ENCODE measurements at regions of chr1 and their contacts with region 1.

Region 1: DNA sequence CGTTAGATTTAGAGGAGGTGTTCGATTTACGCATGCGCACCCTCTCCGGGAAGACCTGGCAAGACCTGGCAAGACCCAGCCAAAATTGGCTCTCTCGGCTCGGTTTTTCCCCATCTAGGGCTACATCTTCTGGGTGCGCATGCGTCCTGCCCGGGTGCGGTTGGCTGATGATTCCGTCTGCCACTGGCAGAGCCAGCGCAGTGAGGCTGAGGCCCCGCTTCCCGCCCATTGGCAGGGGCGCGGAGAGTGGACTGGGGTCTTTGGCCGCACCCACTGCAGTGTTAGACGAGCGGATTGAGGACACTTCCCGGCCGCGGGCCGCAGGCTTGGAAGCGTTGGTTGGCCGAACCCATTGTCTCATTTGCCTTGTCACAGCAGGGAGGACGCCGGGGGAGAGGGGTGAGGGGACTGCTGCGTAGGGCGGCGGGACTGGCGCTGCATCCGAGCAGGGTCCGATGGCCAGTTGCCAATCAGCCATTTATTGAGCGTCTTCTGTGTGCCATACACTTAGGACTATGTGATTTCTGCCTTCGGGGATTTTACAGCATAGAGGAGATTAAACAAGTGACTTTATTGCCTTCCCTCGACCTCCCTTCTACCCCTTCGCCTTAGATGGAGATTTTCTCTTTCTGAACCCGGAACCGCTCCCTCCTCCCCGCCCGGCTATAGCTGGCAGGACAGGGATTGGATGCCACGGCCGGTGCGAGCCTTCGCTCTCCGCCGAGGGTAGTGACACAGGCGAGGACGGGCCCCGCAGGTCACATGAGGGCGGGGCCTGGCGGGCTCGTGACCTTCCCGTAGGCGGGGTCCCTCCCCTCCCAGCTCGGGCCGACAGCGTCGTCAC is 43.7 kb downstream of the MEF2D start:
- DNase-seq: peak; percentile 92 to 93 (median 92)
- ATAC-seq: peak; percentile 92
- H3K4me3 ChIP-seq: peak overlapping the region; percentile 44
- H3K27ac ChIP-seq: peak overlapping the region; percentile 76
- H3K4me1 ChIP-seq: peaks cover 21 to 24% of the 10 kb centered on the region in 2 experiments; a peak in 4 of 5 replicates
- H3K27me3 ChIP-seq: no peaks in the 10 kb centered on the region
- CTCF ChIP-seq: no peak
- EP300 ChIP-seq: peak; percentile 17; the same call in 1 of the 2 replicates
- POLR2A ChIP-seq: peak; percentile 75
- RAD21 ChIP-seq: no peak

Region 2: DNA sequence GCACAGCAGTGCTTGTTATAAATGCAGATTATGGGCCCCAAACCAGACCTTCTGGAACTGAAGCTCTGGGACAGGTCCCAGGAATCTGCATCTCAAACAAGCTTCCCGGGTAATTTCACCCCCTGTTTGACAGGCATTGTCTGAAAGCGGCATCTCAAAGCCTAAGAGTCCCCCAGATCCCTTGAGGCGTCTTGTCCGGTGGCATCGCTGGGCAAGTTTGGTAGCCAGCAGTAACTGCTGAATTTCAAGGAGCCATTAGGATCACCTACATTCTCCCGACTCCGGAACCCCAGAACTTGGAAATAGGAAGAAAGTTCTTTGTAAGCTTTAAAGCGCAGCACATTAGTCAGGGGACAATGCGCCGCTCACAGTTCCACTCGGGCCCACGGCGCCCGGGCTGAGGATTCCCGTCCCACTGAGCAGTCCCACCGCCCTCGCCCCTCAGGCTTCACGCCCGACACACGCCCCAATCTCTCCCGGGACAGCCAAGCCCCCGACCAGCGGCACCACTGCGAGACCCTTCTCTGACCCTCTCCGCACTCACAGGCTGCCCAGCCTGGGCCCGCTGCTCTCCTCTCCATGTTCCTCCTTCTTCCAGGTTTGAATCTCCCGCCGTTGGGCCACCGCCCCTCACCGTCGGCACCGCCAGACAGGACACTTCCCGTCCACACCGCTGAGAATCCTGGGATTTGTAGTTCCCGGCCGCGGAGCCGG is 115.3 kb after region 1 on chr1 and contains the start of gene IQGAP3:
- CTCF ChIA-PET with region 1: no interaction called
- POLR2A ChIA-PET with region 1: no interaction called
- in situ Hi-C with region 1: no loop called
- intact Hi-C with region 1: loop called (anchors 2 kb)
- DNase-seq: peak; percentile 86 to 91 (median 90)
- ATAC-seq: peak; percentile 97
- H3K4me3 ChIP-seq: peak within 1 kb of the TSS; percentile 84
- H3K27ac ChIP-seq: peak within 1 kb of the TSS; percentile 43
- H3K4me1 ChIP-seq: peaks cover 11 to 19% of the 10 kb centered on the region in 2 experiments
- H3K27me3 ChIP-seq: no peaks in the 10 kb centered on the region
- CTCF ChIP-seq: no peak
- EP300 ChIP-seq: no peak
- POLR2A ChIP-seq: peak; percentile 71
- RAD21 ChIP-seq: no peak
- polyA plus RNA-seq, gene IQGAP3: 1.4 TPM

Region 3: GRCh38 chr1:156583821-156584622 is 127.2 kb after region 1 on chr1:
- CTCF ChIA-PET with region 1: no interaction called
- POLR2A ChIA-PET with region 1: no interaction called
- in situ Hi-C with region 1: no loop called
- intact Hi-C with region 1: loop called (anchors 2 kb)
- DNase-seq: peak; percentile 77 to 89 (median 82)
- ATAC-seq: peak; percentile 81
- H3K4me3 ChIP-seq: no peak overlapping the region
- H3K27ac ChIP-seq: no peak overlapping the region
- H3K4me1 ChIP-seq: peaks cover 0 to 10% of the 10 kb centered on the region in 2 experiments; a peak in 3 of 5 replicates
- H3K27me3 ChIP-seq: no peaks in the 10 kb centered on the region
- CTCF ChIP-seq: peak; percentile 88 to 98 (median 90)
- EP300 ChIP-seq: no peak
- POLR2A ChIP-seq: no peak
- RAD21 ChIP-seq: peak; percentile 79 to 92

Region 4: DNA sequence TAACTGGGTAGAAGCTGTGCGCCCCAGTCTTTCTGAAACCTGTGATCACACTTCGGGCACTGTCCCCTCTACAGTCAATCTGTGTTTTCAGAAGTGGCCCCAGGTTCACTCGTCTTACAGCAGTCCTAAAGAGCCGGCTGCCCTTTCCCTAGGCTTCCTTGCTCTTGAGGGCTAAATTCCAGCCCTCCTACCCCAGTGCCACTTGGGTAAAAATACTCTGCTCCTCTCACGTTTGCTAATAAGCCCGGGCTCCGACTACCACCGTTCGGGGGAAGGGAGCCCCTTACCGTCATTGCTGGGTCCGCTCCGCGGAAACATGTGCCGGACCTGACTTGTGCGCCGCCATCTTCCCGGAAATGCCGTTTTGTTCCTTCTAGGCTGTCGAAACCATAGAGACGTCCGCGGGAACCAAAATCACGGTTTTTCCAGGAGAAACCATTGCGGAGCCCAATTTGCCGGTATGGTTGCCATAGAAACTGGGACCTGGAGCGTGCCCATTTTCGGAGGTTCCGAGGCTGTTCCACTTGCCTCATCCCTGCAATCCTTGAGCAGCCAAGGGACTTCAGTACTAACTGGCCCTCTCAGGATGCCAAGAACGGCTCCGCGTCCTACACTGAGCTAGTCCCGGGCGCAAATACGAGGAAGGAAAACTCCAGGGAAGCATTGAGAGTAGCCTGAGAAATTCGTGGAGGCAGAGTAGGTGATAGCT is 144.4 kb after region 1 on chr1 and contains the start of gene GPATCH4:
- CTCF ChIA-PET with region 1: interaction called, 4 read pairs
- POLR2A ChIA-PET with region 1: no interaction called
- in situ Hi-C with region 1: loop called (anchors 5 kb)
- intact Hi-C with region 1: loop called (anchors 1 kb)
- DNase-seq: peak; percentile 75 to 89 (median 78)
- ATAC-seq: peak; percentile 87
- H3K4me3 ChIP-seq: peak within 1 kb of the TSS; percentile 81
- H3K27ac ChIP-seq: peak within 1 kb of the TSS; percentile 80
- H3K4me1 ChIP-seq: peaks cover 12% of the 10 kb centered on the region in 2 experiments; a peak in 4 of 5 replicates
- H3K27me3 ChIP-seq: no peaks in the 10 kb centered on the region
- CTCF ChIP-seq: no peak
- EP300 ChIP-seq: peak; percentile 49; the same call in 1 of the 2 replicates
- POLR2A ChIP-seq: peak; percentile 93
- RAD21 ChIP-seq: 0 out of 4 replicates have a peak, but pooled peaks of 1 of the 2 experiments have one; percentile 10
- polyA plus RNA-seq, gene GPATCH4: 82.1 to 90.8 TPM

Region 5: DNA sequence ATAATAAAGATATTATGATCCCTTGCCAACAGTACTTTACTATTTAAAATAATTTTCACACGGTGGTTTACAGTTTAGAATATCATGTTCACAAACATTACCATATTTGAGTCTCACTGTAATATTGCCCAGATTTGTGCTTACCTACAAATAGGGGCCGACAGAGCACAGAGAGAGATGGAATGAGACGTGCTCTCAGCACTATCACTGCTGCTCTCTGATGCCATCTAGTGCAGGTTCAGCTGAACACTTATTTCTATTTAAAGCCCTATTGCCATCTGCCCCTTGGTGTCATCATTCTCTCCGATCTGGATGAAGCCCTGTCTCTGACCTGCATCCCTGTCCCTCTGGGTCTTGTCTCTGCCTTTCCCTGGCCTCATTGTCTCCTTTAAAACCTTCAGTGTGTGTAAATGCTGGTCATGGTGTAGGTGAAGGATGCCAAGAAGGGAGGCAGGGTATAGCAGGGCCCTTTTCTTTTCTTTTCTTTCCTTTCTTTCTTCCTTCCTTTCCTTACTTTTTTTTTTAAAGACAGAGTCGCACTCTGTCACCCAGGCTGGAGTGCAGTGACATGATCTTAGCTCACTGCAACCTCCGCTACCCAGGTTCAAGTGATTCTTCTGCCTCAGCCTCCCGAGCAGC is 151.3 kb after region 1 on chr1:
- CTCF ChIA-PET with region 1: interaction called, 24 read pairs
- POLR2A ChIA-PET with region 1: interaction called, 3 read pairs
- in situ Hi-C with region 1: loop called (anchors 5 kb)
- intact Hi-C with region 1: loop called (anchors 2 kb)
- DNase-seq: peak; percentile 49 to 80 (median 61)
- ATAC-seq: peak; percentile 98
- H3K4me3 ChIP-seq: no peak overlapping the region
- H3K27ac ChIP-seq: no peak overlapping the region
- H3K4me1 ChIP-seq: peaks cover 0 to 2% of the 10 kb centered on the region in 2 experiments; a peak in 2 of 5 replicates
- H3K27me3 ChIP-seq: no peaks in the 10 kb centered on the region
- CTCF ChIP-seq: peak; percentile 83 to 95 (median 94)
- EP300 ChIP-seq: no peak
- POLR2A ChIP-seq: no peak
- RAD21 ChIP-seq: peak; percentile 70 to 87

Measured in K562 (cell line).